OCI-LY7 (cell line): ENCODE measurements at regions of chr14 and their contacts with region 1.

Region 1: GRCh38 chr14:42353315-42353714 is 746.6 kb downstream of the LRFN5 start:
- DNase-seq: peak; percentile 70
- H3K4me3 ChIP-seq: peak overlapping the region; percentile 32
- H3K27ac ChIP-seq: peak overlapping the region; percentile 79
- H3K4me1 ChIP-seq: peaks cover 22% of the 10 kb centered on the region
- CTCF ChIP-seq: no peak

Region 2: DNA sequence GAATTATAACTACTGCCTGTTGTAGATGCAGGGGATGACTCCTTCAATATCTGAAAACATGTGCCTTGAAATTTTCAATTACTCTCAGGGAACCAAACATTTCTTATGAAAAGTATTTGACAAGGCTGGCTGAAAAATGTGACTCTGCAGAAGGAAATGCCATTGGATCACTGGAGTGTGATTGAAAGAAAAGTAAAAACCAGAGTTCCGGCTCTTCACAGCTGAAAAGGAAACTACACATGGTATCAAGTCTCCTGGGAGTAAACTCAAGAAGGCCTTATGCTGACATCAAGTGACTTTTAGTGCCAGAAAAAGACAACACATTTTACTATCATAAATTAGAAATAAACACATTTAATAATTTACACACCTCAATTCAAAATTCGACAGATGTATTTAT is 53.6 kb before region 1 on chr14:
- CTCF ChIA-PET with region 1: interaction called, 11 read pairs
- POLR2A ChIA-PET with region 1: no interaction called
- intact Hi-C with region 1: loop called (anchors 5 kb)
- DNase-seq: peak; percentile 94
- H3K4me3 ChIP-seq: peak overlapping the region; percentile 50
- H3K27ac ChIP-seq: peak overlapping the region; percentile 82
- H3K4me1 ChIP-seq: peaks cover 25% of the 10 kb centered on the region
- CTCF ChIP-seq: no peak

Region 3: GRCh38 chr14:42335918-42336317 is 17.4 kb before region 1 on chr14:
- CTCF ChIA-PET with region 1: no interaction called
- POLR2A ChIA-PET with region 1: interaction called, 12 read pairs
- intact Hi-C with region 1: no loop called
- DNase-seq: no peak
- H3K4me3 ChIP-seq: no peak overlapping the region
- H3K27ac ChIP-seq: no peak overlapping the region
- H3K4me1 ChIP-seq: peaks cover 4% of the 10 kb centered on the region
- CTCF ChIP-seq: no peak

Region 4: GRCh38 chr14:42374332-42374731 is 21.0 kb after region 1 on chr14:
- CTCF ChIA-PET with region 1: no interaction called
- POLR2A ChIA-PET with region 1: interaction called, 3 read pairs
- intact Hi-C with region 1: loop called (anchors 1 kb)
- DNase-seq: no peak
- H3K4me3 ChIP-seq: no peak overlapping the region
- H3K27ac ChIP-seq: no peak overlapping the region
- H3K4me1 ChIP-seq: no peaks in the 10 kb centered on the region
- CTCF ChIP-seq: no peak

Region 5: GRCh38 chr14:43031557-43031956 is 678.2 kb after region 1 on chr14:
- CTCF ChIA-PET with region 1: no interaction called
- POLR2A ChIA-PET with region 1: no interaction called
- intact Hi-C with region 1: no loop called
- DNase-seq: no peak
- H3K4me3 ChIP-seq: no peak overlapping the region
- H3K27ac ChIP-seq: no peak overlapping the region
- H3K4me1 ChIP-seq: no peaks in the 10 kb centered on the region
- CTCF ChIP-seq: no peak